ENCODE measurements at regions of chr4 and their contacts with region 1.

Region 1: GRCh38 chr4:77044461-77045150 is 31.2 kb downstream of the CCNI start:
- DNase-seq: no peak
- ATAC-seq: peak; percentile 62
- H3K4me3 Mint-ChIP-seq: no peak overlapping the region
- H3K27ac Mint-ChIP-seq: no peak overlapping the region
- H3K4me1 Mint-ChIP-seq: peaks cover 15% of the 10 kb centered on the region
- H3K27me3 Mint-ChIP-seq: no peaks in the 10 kb centered on the region
- CTCF ChIP-seq: peak; percentile 63

Region 2: GRCh38 chr4:76515975-76516843 is 528.4 kb before region 1 on chr4:
- CTCF ChIA-PET with region 1: no interaction called
- POLR2A ChIA-PET with region 1: no interaction called
- intact Hi-C with region 1: loop called (anchors 10 kb)
- DNase-seq: no peak
- ATAC-seq: no peak
- H3K4me3 Mint-ChIP-seq: no peak overlapping the region
- H3K27ac Mint-ChIP-seq: no peak overlapping the region
- H3K4me1 Mint-ChIP-seq: no peaks in the 10 kb centered on the region
- H3K27me3 Mint-ChIP-seq: no peaks in the 10 kb centered on the region
- CTCF ChIP-seq: no peak

Region 3: GRCh38 chr4:76949276-76950051 is 95.1 kb before region 1 on chr4 and contains the start of gene SEPTIN11:
- CTCF ChIA-PET with region 1: interaction called, 16 read pairs
- POLR2A ChIA-PET with region 1: interaction called, 3 read pairs
- intact Hi-C with region 1: no loop called
- DNase-seq: peak; percentile 91
- ATAC-seq: peak; percentile 77
- H3K4me3 Mint-ChIP-seq: peak within 1 kb of the TSS; percentile 88
- H3K27ac Mint-ChIP-seq: peak within 1 kb of the TSS; percentile 84
- H3K4me1 Mint-ChIP-seq: peaks cover 19% of the 10 kb centered on the region
- H3K27me3 Mint-ChIP-seq: peaks cover 2% of the 10 kb centered on the region
- CTCF ChIP-seq: no peak
- total RNA-seq, gene SEPTIN11: 38.6 to 43.3 TPM

Region 4: GRCh38 chr4:78022517-78022916 is 977.9 kb after region 1 on chr4:
- CTCF ChIA-PET with region 1: no interaction called
- POLR2A ChIA-PET with region 1: no interaction called
- intact Hi-C with region 1: no loop called
- DNase-seq: no peak
- ATAC-seq: no peak
- H3K4me3 Mint-ChIP-seq: no peak overlapping the region
- H3K27ac Mint-ChIP-seq: no peak overlapping the region
- H3K4me1 Mint-ChIP-seq: no peaks in the 10 kb centered on the region
- H3K27me3 Mint-ChIP-seq: no peaks in the 10 kb centered on the region
- CTCF ChIP-seq: no peak